ENCODE measurements at regions of chr2 and their contacts with region 1.

Region 1: GRCh38 chr2:105521205-105521604 is 122.4 kb upstream of the FHL2 start:
- DNase-seq: no peak
- H3K4me3 ChIP-seq: no peak overlapping the region
- H3K27ac ChIP-seq: no peak overlapping the region
- H3K4me1 ChIP-seq: peaks cover 0 to 5% of the 10 kb centered on the region in 2 donors
- H3K27me3 ChIP-seq: no peaks in the 10 kb centered on the region
- CTCF ChIP-seq: peak; percentile 63 to 76 (median 66)
- POLR2A ChIP-seq: no peak

Region 2: DNA sequence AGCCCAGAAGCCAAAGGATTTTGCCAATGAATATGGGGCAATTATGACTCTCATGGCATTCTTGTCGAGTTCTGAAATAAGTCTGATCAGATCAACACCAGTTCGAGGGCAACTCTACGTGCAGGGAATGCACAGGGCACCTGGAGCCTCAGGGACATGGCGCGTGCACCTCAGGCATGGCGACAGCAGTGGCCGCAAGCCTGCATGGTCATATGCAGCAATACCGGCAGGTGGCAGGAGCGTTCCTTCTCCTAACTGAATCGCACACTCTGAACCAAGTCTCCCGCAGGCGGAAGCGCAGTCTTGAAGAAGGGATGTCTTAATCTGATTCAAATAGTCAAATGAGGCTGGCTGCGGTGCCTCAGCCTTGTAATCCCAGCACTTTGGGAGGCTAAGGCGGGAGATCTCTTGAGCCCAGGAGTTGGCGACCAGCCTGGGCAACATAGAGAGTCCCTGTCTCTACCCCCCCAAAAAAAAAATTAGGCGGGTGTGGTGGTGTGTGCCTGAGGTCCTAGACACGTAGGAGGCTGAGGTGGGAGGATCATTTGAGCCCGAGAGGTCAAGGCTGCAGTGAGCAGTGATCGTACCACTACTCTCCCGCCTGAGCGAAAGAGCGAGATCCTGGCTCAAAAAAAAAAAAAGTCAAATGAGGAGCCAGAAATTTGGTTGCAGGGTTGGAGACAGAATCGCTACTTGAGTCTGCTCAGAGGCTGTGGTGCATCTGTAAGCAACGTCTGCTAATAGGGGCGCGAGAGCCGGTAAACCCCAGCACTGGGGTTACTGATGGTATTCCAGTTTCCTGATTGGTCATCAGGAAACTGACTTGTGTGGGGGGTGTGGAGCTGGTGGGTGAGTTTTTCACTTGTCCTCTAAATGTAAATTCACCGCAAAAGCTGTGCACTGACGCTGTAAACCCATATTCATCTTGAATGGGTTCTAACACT is 151.2 kb before region 1 on chr2:
- intact Hi-C with region 1: loop called (anchors 1 kb)
- DNase-seq: peak; percentile 87 to 90
- H3K4me3 ChIP-seq: peak overlapping the region in 1 of 3 donors; percentile 26
- H3K27ac ChIP-seq: peak overlapping the region; percentile 26 to 49
- H3K4me1 ChIP-seq: peaks cover 0 to 12% of the 10 kb centered on the region in 2 donors
- H3K27me3 ChIP-seq: peaks cover 0 to 2% of the 10 kb centered on the region in 2 donors
- CTCF ChIP-seq: peak; percentile 89 to 97 (median 97)
- POLR2A ChIP-seq: no peak